Naive thymus-derived CD4-positive, alpha-beta T cell (primary cell): ENCODE measurements at regions of chr19 and their contacts with region 1.

Region 1: DNA sequence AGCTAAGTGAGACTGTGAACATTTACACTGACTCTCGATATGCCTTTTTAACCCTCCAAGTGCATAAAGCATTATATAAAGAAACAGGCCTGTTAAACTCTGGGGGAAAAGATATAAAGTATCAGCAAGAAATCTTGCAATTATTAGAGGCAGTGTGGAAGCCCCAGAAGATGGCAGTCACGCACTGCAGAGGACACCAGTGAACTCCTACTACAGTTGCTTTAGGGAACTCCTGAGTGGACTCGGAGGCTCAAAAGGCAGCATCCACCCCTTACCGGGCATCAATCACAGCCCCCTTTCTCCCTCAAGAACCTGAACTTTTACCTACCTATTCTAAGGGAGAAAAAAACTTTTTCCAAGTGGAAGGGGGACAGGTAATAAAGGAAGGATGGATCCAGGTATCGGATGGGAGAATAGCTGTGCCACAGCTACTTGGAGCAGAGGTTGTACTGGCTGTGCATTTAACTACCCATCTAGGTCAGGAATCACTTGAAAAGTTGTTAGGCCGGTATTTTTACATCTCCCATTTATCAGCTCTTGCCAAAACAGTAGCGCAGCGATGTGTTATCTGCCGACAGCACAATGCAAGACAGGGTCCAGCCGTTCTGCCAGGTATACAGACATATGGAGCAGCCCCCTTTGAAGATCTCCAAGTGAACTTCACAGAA is 80.1 kb downstream of the ZNF486 start:
- DNase-seq: peak in 3 of 9 donors; percentile 10 to 33 (median 26)
- ATAC-seq: peak; percentile 46
- H3K4me3 ChIP-seq: no peak overlapping the region
- H3K4me3 Mint-ChIP-seq: no peak overlapping the region
- H3K27ac ChIP-seq: no peak overlapping the region
- H3K27ac Mint-ChIP-seq: peak overlapping the region in 1 of 9 donors; percentile 24
- H3K4me1 ChIP-seq: no peaks in the 10 kb centered on the region
- H3K4me1 Mint-ChIP-seq: peaks cover 0 to 2% (median 0%) of the 10 kb centered on the region in 7 donors
- H3K27me3 ChIP-seq: no peaks in the 10 kb centered on the region
- H3K27me3 Mint-ChIP-seq: no peaks in the 10 kb centered on the region

Region 2: DNA sequence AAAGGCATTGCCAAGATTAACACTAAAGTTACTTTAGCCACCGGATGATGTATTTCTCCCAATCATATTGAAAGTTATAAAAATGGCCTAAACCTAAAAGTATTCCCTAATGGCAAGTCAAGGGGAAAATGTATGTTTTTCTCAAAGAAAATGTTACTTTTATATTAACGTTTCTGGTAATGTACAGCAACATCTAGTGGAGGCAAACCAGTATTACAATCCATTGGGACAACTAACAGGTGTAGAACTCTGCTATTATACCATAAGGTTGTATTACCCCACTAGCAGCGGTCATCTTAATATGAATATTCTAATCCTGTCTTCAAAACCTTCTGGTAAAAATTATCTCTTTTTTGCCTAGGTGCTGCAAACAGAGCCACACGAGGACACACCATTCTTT is 1451.1 kb after region 1 on chr19:
- CTCF ChIA-PET with region 1: no interaction called
- POLR2A ChIA-PET with region 1: no interaction called
- intact Hi-C with region 1: loop called in 1 of 2 experiments (anchors 2 kb)
- DNase-seq: peak in 5 of 9 donors; percentile 40 to 57 (median 45)
- ATAC-seq: peak; percentile 72
- H3K4me3 ChIP-seq: no peak overlapping the region
- H3K4me3 Mint-ChIP-seq: no peak overlapping the region
- H3K27ac ChIP-seq: no peak overlapping the region
- H3K27ac Mint-ChIP-seq: no peak overlapping the region
- H3K4me1 ChIP-seq: no peaks in the 10 kb centered on the region
- H3K4me1 Mint-ChIP-seq: no peaks in the 10 kb centered on the region
- H3K27me3 ChIP-seq: no peaks in the 10 kb centered on the region
- H3K27me3 Mint-ChIP-seq: peaks cover 0 to 4% (median 0%) of the 10 kb centered on the region in 5 donors